Activated CD4-positive, alpha-beta T cell treated with anti-CD3 and anti-CD28 coated beads for 36 hours (primary cell): ENCODE measurements at regions of chr17 and their contacts with region 1.

Region 1: DNA sequence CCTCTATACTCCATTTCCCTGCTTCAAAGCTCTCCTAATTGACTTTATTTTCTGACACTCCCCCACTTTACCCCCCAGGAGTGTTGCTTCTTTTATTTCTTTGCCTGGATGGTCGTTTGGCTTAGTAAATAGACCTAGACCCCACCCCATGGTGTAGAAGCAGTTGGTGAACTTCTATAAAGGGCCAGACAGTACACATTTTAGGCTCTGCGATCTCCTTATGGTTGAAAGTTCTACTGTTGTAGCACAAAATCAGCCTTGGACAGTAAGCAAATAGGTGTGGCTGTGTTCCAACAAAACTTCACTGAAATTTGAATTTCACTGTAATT is 31.9 kb downstream of the ZNF287 start:
- DNase-seq: no peak
- ATAC-seq: no peak
- H3K4me3 Mint-ChIP-seq: peak overlapping the region; percentile 92
- H3K27ac Mint-ChIP-seq: no peak overlapping the region
- H3K4me1 Mint-ChIP-seq: peaks cover 9% of the 10 kb centered on the region
- H3K27me3 Mint-ChIP-seq: no peaks in the 10 kb centered on the region

Region 2: DNA sequence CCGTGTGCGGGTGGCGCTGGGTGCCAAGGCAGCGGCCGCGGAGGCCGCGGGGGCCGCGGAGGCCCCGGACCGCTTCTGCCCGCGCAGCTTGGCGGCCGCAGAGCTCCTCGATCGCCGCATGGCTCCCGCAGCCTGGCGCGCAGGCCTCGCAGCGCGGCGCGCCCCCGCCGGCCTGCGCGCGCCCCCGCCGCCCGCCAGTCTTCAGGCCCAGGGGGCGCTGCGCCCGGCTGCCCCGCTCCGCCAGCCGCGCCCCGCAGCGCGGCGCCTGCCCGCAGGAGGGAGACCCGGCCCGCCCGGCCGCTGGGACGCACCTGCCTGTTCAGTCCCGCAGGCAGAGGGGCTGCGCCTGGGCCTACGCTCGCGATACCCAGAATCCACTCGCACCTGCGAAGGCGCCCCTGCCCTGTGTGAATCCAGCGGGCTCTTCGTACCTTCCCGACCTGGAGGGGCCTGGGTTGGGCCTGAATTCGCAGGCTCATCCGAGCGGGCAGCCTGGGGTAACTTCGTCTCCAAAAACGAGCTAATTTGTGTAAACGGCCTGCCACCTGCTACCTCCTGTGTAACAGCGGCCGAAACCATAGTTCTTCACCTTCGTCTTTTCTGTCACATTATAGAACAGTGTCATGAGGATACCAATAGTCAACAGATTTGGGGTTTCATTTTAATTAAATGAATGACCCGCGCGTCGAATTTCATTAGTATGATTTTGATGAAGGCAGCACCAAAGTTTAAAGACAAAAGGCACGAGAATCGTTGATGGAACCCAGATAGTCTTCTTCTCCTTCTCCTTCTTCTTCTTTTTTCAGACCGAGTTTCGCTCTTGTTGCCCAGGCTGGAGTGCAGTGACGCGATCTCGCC is 183.5 kb before region 1 on chr17 and contains the start of gene CENPV:
- CTCF ChIA-PET with region 1: interaction called, 3 read pairs
- POLR2A ChIA-PET with region 1: no interaction called
- intact Hi-C with region 1: loop called in 1 of 2 experiments (anchors 1 kb)
- DNase-seq: peak; percentile 81
- ATAC-seq: peak; percentile 82
- H3K4me3 Mint-ChIP-seq: peak within 1 kb of the TSS; percentile 97
- H3K27ac Mint-ChIP-seq: peak within 1 kb of the TSS; percentile 84
- H3K4me1 Mint-ChIP-seq: peaks cover 22% of the 10 kb centered on the region
- H3K27me3 Mint-ChIP-seq: no peaks in the 10 kb centered on the region
- total RNA-seq, gene CENPV: 100 to 132 TPM

Region 3: DNA sequence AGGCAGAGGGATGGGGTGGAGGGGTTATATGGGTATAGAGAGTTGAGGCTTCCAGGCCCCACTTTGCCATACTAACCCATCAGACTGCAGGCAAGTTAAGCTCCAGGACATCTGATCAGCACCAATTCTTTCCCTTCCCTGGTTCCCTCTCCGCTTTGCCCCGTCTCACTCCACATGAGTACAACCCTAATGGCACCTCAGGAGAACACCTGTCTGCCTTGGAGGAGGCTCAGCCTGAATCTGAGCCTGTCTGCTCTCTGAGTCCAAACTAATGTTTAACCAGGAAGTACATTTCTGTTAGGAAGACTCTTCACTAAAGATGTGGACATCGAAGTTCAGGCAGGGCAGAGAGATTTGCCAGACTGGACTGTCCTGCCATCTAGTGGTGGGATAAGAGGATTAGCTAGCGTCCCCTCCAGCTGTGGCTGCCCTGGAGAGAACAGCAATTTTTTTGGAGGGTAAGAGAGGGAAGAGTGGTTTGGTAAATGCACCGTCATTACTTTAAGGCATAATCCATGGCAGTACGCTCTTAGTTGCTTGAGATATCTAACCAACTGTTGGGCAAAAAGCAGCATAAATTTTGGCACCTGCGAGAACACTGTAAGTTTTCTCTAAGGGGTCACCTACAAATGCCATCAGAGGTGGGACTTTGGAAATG is 15.9 kb before region 1 on chr17:
- CTCF ChIA-PET with region 1: interaction called, 17 read pairs
- POLR2A ChIA-PET with region 1: no interaction called
- intact Hi-C with region 1: no loop called
- DNase-seq: peak; percentile 80
- ATAC-seq: peak; percentile 95
- H3K4me3 Mint-ChIP-seq: no peak overlapping the region
- H3K27ac Mint-ChIP-seq: no peak overlapping the region
- H3K4me1 Mint-ChIP-seq: peaks cover 8% of the 10 kb centered on the region
- H3K27me3 Mint-ChIP-seq: peaks cover 31% of the 10 kb centered on the region

Region 4: GRCh38 chr17:16589097-16589969 is 52.2 kb after region 1 on chr17:
- CTCF ChIA-PET with region 1: interaction called, 25 read pairs
- POLR2A ChIA-PET with region 1: no interaction called
- intact Hi-C with region 1: loop called (anchors 1 to 2 kb)
- DNase-seq: peak; percentile 95
- ATAC-seq: peak; percentile 90
- H3K4me3 Mint-ChIP-seq: peak overlapping the region; percentile 64
- H3K27ac Mint-ChIP-seq: no peak overlapping the region
- H3K4me1 Mint-ChIP-seq: peaks cover 8% of the 10 kb centered on the region
- H3K27me3 Mint-ChIP-seq: peaks cover 34% of the 10 kb centered on the region

Region 5: DNA sequence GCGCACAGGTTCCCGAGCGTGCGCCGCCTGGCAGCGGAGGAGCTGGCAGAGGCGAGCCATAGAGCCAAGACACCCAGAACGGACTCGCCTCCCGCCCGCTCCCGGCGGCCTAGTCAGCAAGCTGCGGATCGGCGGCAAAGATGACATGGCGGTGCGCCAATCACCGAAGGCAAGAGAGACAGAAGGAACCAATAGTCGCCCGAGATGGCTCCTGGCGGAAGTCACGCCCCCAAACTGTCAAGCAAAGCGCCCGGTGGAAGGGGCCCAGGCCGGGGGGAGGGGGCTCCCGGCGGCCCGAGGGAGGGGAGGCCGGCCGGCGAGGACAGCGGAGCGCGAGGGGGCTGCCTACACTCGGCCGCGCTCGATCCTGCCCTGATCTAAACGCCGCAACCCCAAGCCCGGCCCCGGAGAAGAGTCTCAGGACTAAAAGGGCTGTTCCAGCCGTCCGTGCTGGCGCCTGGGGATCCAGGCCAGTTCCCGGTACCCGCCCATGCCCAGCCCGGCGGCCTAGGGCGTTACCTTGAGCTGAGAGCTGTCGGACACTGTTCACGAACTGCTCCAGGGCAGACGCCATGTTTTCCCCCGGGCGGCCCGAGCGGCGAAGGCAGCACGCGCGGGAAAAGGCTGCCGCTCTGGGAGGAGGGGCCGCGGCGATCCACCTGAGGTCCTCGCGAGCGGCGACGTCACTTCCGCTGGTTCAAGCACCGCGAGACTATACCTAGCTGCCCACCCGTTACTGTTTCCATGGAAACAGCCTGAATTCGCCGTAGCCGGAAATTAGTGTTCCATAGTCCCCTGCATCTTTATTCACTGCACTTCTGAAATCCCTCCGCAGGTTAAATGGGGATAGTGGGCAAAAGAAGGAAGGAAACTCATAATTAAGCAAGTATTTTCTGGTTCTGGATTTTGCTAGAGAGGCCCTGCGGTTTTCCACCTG is 743.8 kb after region 1 on chr17 and contains the start of gene COPS3:
- CTCF ChIA-PET with region 1: no interaction called
- POLR2A ChIA-PET with region 1: no interaction called
- intact Hi-C with region 1: loop called in 1 of 2 experiments (anchors 5 kb)
- DNase-seq: peak; percentile 99
- ATAC-seq: peak; percentile 94
- H3K4me3 Mint-ChIP-seq: peak within 1 kb of the TSS; percentile 92
- H3K27ac Mint-ChIP-seq: peak within 1 kb of the TSS; percentile 95
- H3K4me1 Mint-ChIP-seq: peaks cover 41% of the 10 kb centered on the region
- H3K27me3 Mint-ChIP-seq: no peaks in the 10 kb centered on the region
- total RNA-seq, gene COPS3: 79.6 to 83.1 TPM

Region 6: DNA sequence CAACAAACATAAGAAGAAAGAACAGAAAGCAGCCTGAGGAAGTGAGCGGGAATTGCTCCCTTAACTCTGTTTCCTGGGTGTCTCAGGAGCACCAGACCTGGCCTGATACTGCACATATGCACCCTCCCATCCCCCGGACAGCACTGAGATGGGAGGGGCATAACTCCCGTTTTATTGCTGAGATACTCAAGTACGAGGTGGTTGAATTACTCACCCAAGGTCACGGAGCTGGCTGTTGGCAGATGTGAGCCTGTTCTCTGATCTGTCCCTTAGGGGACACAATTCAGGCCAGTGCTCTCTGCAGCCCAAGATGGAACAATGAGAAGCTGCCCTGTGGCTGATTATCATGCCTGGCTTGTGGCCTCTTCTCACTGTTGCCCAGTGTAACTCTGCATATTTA is 930.6 kb after region 1 on chr17:
- CTCF ChIA-PET with region 1: no interaction called
- POLR2A ChIA-PET with region 1: no interaction called
- intact Hi-C with region 1: no loop called
- DNase-seq: no peak
- ATAC-seq: no peak
- H3K4me3 Mint-ChIP-seq: no peak overlapping the region
- H3K27ac Mint-ChIP-seq: no peak overlapping the region
- H3K4me1 Mint-ChIP-seq: peaks cover 5% of the 10 kb centered on the region
- H3K27me3 Mint-ChIP-seq: peaks cover 4% of the 10 kb centered on the region